ENCODE measurements at regions of chr19 and their contacts with region 1.

Region 1: GRCh38 chr19:54653181-54653809 is 9.5 kb upstream of the LILRB4 start:
- DNase-seq: peak; percentile 52 to 67
- ATAC-seq: peak; percentile 68 to 77; a peak in 5 of 6 replicates
- H3K4me3 ChIP-seq: no peak overlapping the region
- H3K27ac ChIP-seq: no peak overlapping the region
- H3K4me1 ChIP-seq: no peaks in the 10 kb centered on the region
- CTCF ChIP-seq: peak; percentile 70
- EP300 ChIP-seq: no peak
- POLR2A ChIP-seq: no peak
- RAD21 ChIP-seq: peak; percentile 57 to 58; a peak in 4 of 5 replicates

Region 2: GRCh38 chr19:54638683-54639082 is 14.6 kb before region 1 on chr19:
- CTCF ChIA-PET with region 1: interaction called, 12 read pairs
- POLR2A ChIA-PET with region 1: no interaction called
- DNase-seq: no peak
- ATAC-seq: no peak
- H3K4me3 ChIP-seq: no peak overlapping the region
- H3K27ac ChIP-seq: no peak overlapping the region
- H3K4me1 ChIP-seq: no peaks in the 10 kb centered on the region
- CTCF ChIP-seq: no peak
- EP300 ChIP-seq: no peak
- POLR2A ChIP-seq: no peak
- RAD21 ChIP-seq: no peak

Region 3: GRCh38 chr19:54740134-54740497 is 86.8 kb after region 1 on chr19:
- CTCF ChIA-PET with region 1: no interaction called
- POLR2A ChIA-PET with region 1: no interaction called
- DNase-seq: no peak
- ATAC-seq: no peak
- H3K4me3 ChIP-seq: no peak overlapping the region
- H3K27ac ChIP-seq: no peak overlapping the region
- H3K4me1 ChIP-seq: no peaks in the 10 kb centered on the region
- CTCF ChIP-seq: no peak
- EP300 ChIP-seq: no peak
- POLR2A ChIP-seq: no peak
- RAD21 ChIP-seq: no peak

Measured in A549 (cell line).